ENCODE measurements at regions of chr9 and their contacts with region 1.

Region 1: DNA sequence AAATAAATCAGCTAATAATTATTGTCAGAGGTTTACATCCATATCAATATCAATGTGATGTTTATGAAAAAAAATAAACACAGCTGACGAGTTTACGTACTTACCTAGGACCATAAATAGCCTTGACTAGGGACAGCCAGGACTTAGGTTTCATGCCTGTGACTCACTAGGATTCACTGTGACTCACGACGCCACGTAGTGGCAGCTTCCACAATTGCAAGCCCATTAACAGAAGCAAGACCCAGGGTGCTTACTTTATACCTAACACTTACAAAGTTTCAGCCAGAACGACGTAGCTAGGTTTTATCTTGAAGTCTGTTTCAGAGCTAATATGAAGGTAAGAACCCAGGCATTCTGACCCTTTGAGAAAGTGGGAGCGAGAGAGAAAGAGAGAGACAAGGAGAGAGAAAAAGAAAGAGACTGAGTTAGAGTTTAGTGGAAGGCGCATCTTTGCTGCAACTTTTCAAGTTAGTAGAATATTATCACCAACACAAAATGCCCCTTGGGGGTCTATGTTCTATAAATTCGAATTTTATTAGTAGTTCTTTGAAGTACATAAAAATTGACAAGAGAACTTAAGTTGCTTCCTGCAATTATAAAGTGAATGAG is 191.2 kb downstream of the GNA14 start:
- DNase-seq: peak; percentile 93
- H3K4me3 ChIP-seq: no peak overlapping the region
- H3K27ac ChIP-seq: no peak overlapping the region
- H3K4me1 ChIP-seq: no peaks in the 10 kb centered on the region
- H3K27me3 ChIP-seq: no peaks in the 10 kb centered on the region
- CTCF ChIP-seq: peak; percentile 81 to 90
- POLR2A ChIP-seq: no peak

Region 2: DNA sequence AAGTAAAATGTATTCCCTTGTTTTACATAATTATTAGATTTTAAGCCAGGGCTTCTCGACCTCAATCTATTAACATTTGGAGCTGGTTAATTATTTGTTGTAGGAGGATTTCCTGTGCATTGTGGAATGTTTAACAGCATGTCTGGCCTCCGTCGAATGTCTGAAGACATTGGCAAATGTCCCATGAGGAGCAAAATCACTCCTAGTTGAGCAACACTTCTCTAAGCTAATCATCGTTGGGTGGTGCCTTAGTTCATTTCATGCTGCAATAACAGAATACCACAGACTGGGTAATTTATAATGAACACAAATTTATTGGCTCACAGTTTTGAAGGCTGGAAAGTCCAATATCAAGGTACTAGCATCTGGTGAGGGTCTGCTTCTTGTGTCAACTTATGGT is 293.0 kb before region 1 on chr9:
- CTCF ChIA-PET with region 1: interaction called, 18 read pairs
- POLR2A ChIA-PET with region 1: no interaction called
- dilution Hi-C with region 1: no loop called
- intact Hi-C with region 1: loop called (anchors 2 kb)
- DNase-seq: peak; percentile 64
- H3K4me3 ChIP-seq: no peak overlapping the region
- H3K27ac ChIP-seq: no peak overlapping the region
- H3K4me1 ChIP-seq: peaks cover 17% of the 10 kb centered on the region
- H3K27me3 ChIP-seq: no peaks in the 10 kb centered on the region
- CTCF ChIP-seq: no peak
- POLR2A ChIP-seq: no peak

Region 3: GRCh38 chr9:77433675-77434445 is 23.1 kb before region 1 on chr9:
- CTCF ChIA-PET with region 1: interaction called, 70 read pairs
- POLR2A ChIA-PET with region 1: no interaction called
- dilution Hi-C with region 1: no loop called
- intact Hi-C with region 1: loop called (anchors 2 kb)
- DNase-seq: peak; percentile 68
- H3K4me3 ChIP-seq: no peak overlapping the region
- H3K27ac ChIP-seq: no peak overlapping the region
- H3K4me1 ChIP-seq: peaks cover 16% of the 10 kb centered on the region
- H3K27me3 ChIP-seq: no peaks in the 10 kb centered on the region
- CTCF ChIP-seq: peak; percentile 96
- POLR2A ChIP-seq: no peak

Region 4: GRCh38 chr9:77469515-77470231 is 12.7 kb after region 1 on chr9:
- CTCF ChIA-PET with region 1: interaction called, 21 read pairs
- POLR2A ChIA-PET with region 1: no interaction called
- dilution Hi-C with region 1: no loop called
- intact Hi-C with region 1: no loop called
- DNase-seq: no peak
- H3K4me3 ChIP-seq: no peak overlapping the region
- H3K27ac ChIP-seq: no peak overlapping the region
- H3K4me1 ChIP-seq: no peaks in the 10 kb centered on the region
- H3K27me3 ChIP-seq: peaks cover 0 to 2% of the 10 kb centered on the region in 2 experiments
- CTCF ChIP-seq: no peak
- POLR2A ChIP-seq: no peak

Region 5: DNA sequence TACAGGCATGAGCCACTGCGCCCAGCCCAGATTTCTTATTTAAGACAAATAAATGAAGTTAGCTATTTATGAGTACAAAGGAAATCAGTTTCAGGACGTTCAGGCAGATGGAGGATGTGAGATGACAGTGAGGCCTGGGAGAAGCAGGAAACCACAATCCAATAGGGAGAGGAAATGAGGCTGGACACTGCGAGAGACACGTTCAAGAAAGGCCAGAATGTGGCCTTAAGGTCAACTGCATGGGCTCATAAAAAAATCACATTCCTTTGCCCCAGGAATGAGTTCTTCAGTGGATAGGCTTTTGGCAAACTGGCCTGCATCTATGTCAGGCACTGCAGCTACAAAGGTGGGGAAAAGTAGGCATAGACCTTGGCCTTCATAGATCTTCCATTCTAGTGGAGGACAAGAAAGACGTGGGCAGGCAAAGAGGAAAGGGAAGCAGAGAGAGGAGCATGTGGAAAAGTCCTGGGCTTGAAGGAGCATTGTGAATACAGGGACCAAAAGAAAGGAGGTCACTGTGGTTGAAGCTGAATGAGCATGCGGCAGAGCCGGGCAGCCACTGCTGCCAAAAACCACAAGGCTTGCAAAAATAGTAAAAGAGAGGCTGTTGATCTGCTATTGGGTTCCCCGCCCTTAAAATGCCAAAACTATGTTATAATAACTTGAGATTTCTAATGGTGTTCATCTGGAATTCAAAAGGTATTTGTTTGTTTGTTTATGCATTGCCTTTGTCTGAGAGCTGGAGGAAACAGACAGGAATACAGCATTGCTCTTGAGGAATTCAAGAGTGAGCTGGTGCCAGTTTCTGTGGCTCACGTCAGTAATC is 58.2 kb after region 1 on chr9:
- CTCF ChIA-PET with region 1: interaction called, 10 read pairs
- POLR2A ChIA-PET with region 1: no interaction called
- dilution Hi-C with region 1: no loop called
- intact Hi-C with region 1: loop called (anchors 1 kb)
- DNase-seq: peak; percentile 94
- H3K4me3 ChIP-seq: no peak overlapping the region
- H3K27ac ChIP-seq: peak overlapping the region; percentile 82
- H3K4me1 ChIP-seq: peaks cover 31% of the 10 kb centered on the region
- H3K27me3 ChIP-seq: no peaks in the 10 kb centered on the region
- CTCF ChIP-seq: no peak
- POLR2A ChIP-seq: peak; percentile 57

Region 6: DNA sequence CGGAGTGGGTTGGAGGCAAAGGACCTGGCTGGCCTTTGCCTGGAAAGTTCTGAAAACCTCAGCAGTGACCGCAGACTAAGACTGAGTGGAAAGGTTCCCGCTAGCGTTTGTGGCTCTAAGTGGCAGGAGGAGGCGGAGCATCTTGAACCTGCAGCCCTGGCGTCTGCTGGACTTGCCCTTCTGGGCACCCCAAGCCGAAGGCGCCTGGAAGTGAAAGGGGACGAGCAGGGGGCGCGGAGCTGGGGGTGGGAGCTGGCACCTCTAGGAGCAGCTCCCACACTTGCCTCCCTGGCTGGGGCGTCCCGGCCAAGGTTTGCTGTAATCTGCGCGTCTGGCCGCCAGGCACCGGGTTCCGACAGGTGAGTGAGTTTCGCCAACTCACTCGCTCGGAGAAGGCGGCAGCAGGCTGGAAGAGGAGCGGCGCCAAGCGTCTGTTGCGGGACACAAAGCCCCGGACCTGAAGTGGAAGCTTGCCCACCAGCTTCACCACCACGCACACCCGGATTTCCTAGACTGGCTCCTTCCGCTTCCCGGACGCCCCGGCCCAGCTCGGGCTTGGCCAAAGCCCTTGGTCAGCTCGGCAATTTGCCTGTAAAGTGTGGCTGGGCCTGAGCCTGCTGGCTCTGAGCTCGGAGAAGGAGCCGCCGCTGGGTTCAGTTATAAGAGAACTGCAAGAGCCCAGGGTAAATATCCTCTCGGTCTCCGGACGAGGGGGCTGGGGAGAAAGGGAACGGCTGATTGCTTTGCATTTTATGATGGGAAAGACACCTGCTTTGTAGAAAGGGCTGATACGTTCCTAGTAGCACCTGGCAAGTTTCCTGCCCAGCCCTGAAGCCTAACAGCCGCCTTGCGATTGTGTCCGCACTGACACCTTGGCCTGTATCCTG is 191.5 kb after region 1 on chr9 and contains the start of gene GNA14:
- CTCF ChIA-PET with region 1: interaction called, 97 read pairs
- POLR2A ChIA-PET with region 1: no interaction called
- dilution Hi-C with region 1: no loop called
- intact Hi-C with region 1: loop called (anchors 1 kb)
- DNase-seq: peak; percentile 51
- H3K4me3 ChIP-seq: peak within 1 kb of the TSS; percentile 35 to 69 (median 54)
- H3K27ac ChIP-seq: no peak within 1 kb of the TSS
- H3K4me1 ChIP-seq: peaks cover 18% of the 10 kb centered on the region
- H3K27me3 ChIP-seq: peaks cover 1 to 6% of the 10 kb centered on the region in 2 experiments
- CTCF ChIP-seq: no peak
- POLR2A ChIP-seq: no peak
- total RNA-seq, gene GNA14: 3.0 and 3.3 TPM in 2 replicates

Region 7: DNA sequence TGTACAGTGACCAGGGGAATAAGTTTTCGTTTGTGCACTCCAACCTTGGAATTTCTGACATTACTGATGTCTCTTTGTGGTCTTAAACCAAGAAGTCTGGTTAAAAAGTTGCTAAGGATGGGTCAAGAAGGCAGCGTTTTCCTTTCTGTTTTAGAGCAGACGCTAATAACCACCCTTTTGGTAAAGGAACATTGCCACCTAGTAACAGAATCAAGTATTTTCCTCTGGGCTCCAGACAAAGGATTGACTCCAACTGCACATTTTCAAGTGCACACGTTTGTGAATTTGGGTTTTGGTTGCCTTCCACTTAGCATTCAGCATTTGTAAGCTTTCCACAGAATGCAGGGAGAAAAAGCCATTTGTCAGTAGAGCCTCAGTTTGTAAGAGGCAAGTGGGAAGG is 756.8 kb after region 1 on chr9:
- CTCF ChIA-PET with region 1: no interaction called
- POLR2A ChIA-PET with region 1: no interaction called
- dilution Hi-C with region 1: no loop called
- intact Hi-C with region 1: loop called (anchors 10 kb)
- DNase-seq: peak; percentile 77
- H3K4me3 ChIP-seq: no peak overlapping the region
- H3K27ac ChIP-seq: no peak overlapping the region
- H3K4me1 ChIP-seq: peaks cover 2% of the 10 kb centered on the region
- H3K27me3 ChIP-seq: no peaks in the 10 kb centered on the region
- CTCF ChIP-seq: peak; percentile 17 to 46
- POLR2A ChIP-seq: no peak